Psoas muscle (tissue), 8 donors: ENCODE measurements at regions of chr5 and their contacts with region 1.

Region 1: GRCh38 chr5:72687288-72687687 is 129.2 kb upstream of the TNPO1 start:
- DNase-seq: no peak
- ATAC-seq: no peak
- H3K4me3 ChIP-seq: no peak overlapping the region
- H3K27ac ChIP-seq: no peak overlapping the region
- H3K4me1 ChIP-seq: no peaks in the 10 kb centered on the region
- H3K27me3 ChIP-seq: peaks cover 0 to 2% (median 0%) of the 10 kb centered on the region in 3 donors
- CTCF ChIP-seq: no peak

Region 2: GRCh38 chr5:73189871-73190376 is 502.6 kb after region 1 on chr5:
- intact Hi-C with region 1: loop called in 1 of 2 experiments (anchors 10 kb)
- DNase-seq: peak in 1 of 2 donors; percentile 24
- ATAC-seq: no peak
- H3K4me3 ChIP-seq: no peak overlapping the region
- H3K27ac ChIP-seq: no peak overlapping the region
- H3K4me1 ChIP-seq: no peaks in the 10 kb centered on the region
- H3K27me3 ChIP-seq: peaks cover 0 to 3% (median 2%) of the 10 kb centered on the region in 3 donors
- CTCF ChIP-seq: no peak